Heart right ventricle (tissue), 16 donors: ENCODE measurements at regions of chr11 and their contacts with region 1.

Region 1: DNA sequence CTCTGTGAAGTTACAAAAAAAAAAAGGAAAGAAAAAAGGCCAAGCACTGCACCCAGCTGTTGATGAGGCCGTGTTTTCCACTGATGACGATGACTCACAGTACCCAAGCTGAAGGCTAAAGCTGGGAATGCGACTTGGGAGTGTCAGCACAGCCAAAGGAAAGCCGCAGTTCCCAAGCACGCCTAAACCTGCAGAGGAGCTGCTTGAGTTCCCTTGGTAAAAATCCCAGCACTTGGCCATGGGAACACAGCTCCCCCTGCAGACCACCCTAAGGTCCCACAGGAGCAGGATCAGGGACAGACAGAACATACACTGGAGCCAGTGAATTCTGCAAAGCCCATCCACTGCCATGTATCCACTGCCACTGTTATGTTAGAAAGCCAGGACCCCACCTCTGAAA is 39.9 kb downstream of the SERGEF start:
- DNase-seq: peak; percentile 23 to 59
- ATAC-seq: peak; percentile 78 to 89 (median 86)
- H3K4me3 ChIP-seq: no peak overlapping the region
- H3K27ac ChIP-seq: no peak overlapping the region
- H3K4me1 ChIP-seq: peaks cover 0 to 4% (median 0%) of the 10 kb centered on the region in 9 donors
- H3K27me3 ChIP-seq: no peaks in the 10 kb centered on the region
- CTCF ChIP-seq: peak; percentile 21 to 76 (median 65)

Region 2: DNA sequence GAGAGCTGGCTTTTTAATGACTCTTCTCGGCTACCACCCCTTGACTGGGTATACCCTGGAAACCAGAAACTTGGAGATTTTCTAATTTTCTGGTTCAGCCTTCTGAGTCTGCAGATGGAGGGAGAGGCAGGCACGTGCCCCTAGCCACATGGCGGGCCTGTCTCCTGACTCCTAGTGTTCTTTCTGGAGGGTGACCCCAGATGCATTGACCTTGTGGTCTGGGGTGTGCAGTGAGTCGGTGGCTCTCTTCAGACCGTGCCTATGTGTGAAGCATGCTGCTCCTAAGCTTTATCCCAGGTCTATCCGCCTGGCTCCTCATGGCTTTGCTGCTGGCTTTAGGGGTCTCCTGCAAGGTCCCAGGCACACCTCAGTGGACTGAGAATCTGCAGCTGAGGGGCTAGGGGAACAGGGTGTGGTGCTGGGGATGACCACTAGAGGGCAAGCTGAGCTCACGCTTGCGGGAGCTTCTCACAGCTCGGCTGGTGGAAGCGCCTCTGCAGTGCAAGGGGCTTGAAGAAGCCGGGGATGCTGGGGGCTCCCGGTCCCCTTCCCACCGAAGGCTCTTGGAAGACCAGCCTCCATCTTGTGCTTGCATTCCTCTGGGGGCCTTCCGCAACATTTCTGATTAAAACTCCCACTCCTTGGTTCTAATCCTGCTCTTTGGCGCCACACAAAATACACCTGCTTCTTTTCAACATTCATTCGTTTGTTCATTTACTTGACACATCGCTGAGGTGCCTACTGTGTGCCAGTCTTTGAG is 374.1 kb before region 1 on chr11:
- intact Hi-C with region 1: loop called in 6 of 10 experiments (anchors 2 to 5 kb)
- DNase-seq: peak; percentile 71 to 74
- ATAC-seq: peak; percentile 73 to 86 (median 82)
- H3K4me3 ChIP-seq: no peak overlapping the region
- H3K27ac ChIP-seq: no peak overlapping the region
- H3K4me1 ChIP-seq: no peaks in the 10 kb centered on the region
- H3K27me3 ChIP-seq: peaks cover 0 to 12% (median 7%) of the 10 kb centered on the region in 7 donors
- CTCF ChIP-seq: peak; percentile 88 to 96 (median 92)

Region 3: GRCh38 chr11:17760102-17761029 is 212.6 kb before region 1 on chr11:
- intact Hi-C with region 1: loop called in 8 of 10 experiments (anchors 2 to 10 kb)
- DNase-seq: peak; percentile 40 to 43
- ATAC-seq: peak; percentile 79 to 87 (median 85)
- H3K4me3 ChIP-seq: no peak overlapping the region
- H3K27ac ChIP-seq: no peak overlapping the region
- H3K4me1 ChIP-seq: peaks cover 0 to 4% (median 0%) of the 10 kb centered on the region in 9 donors
- H3K27me3 ChIP-seq: no peaks in the 10 kb centered on the region
- CTCF ChIP-seq: peak; percentile 30 to 77 (median 61)

Region 4: DNA sequence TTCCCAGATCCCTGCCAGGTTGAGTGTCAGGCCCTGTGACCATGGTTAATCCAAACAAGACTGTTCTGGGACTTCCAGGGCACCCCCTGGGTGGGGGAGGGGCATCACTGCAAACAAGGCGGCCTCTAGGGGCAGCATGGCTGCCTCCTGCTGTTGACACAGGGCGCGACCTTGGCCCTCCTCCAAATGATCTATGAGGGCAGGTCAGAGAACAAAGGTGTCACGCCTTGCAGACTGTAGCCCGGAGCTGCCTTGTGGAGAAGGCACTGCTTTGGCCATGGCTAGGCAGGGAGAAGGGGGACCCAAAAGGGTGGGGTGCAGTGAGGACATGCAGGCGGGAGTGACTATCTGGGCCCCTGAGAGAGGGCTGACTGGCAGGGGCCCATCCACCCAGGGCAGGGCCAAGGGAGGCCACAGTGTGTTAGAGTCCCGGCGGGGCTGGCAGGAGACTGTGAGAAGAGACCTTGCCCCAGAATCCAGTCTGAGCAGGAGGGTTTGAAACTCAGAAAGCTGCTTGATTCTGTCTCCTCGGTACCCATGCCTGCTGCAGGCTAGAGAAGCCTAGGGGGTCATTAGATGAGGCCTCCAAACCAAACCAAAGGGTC is 202.8 kb before region 1 on chr11:
- intact Hi-C with region 1: loop called in 5 of 10 experiments (anchors 5 to 10 kb)
- DNase-seq: no peak
- ATAC-seq: no peak
- H3K4me3 ChIP-seq: no peak overlapping the region
- H3K27ac ChIP-seq: no peak overlapping the region
- H3K4me1 ChIP-seq: no peaks in the 10 kb centered on the region
- H3K27me3 ChIP-seq: no peaks in the 10 kb centered on the region
- CTCF ChIP-seq: no peak